ENCODE measurements at regions of chr4 and their contacts with region 1.

Region 1: GRCh38 chr4:99808260-99808857 is 8.3 kb upstream of the DAPP1 start:
- DNase-seq: peak; percentile 53 to 82 (median 66)
- ATAC-seq: peak; percentile 98
- H3K4me3 ChIP-seq: no peak overlapping the region
- H3K4me3 Mint-ChIP-seq: no peak overlapping the region
- H3K27ac ChIP-seq: no peak overlapping the region
- H3K27ac Mint-ChIP-seq: no peak overlapping the region
- H3K4me1 ChIP-seq: peaks cover 3% of the 10 kb centered on the region
- H3K4me1 Mint-ChIP-seq: peaks cover 6% of the 10 kb centered on the region
- H3K27me3 ChIP-seq: no peaks in the 10 kb centered on the region
- H3K27me3 Mint-ChIP-seq: peaks cover 6% of the 10 kb centered on the region
- CTCF ChIP-seq: peak; percentile 85

Region 2: DNA sequence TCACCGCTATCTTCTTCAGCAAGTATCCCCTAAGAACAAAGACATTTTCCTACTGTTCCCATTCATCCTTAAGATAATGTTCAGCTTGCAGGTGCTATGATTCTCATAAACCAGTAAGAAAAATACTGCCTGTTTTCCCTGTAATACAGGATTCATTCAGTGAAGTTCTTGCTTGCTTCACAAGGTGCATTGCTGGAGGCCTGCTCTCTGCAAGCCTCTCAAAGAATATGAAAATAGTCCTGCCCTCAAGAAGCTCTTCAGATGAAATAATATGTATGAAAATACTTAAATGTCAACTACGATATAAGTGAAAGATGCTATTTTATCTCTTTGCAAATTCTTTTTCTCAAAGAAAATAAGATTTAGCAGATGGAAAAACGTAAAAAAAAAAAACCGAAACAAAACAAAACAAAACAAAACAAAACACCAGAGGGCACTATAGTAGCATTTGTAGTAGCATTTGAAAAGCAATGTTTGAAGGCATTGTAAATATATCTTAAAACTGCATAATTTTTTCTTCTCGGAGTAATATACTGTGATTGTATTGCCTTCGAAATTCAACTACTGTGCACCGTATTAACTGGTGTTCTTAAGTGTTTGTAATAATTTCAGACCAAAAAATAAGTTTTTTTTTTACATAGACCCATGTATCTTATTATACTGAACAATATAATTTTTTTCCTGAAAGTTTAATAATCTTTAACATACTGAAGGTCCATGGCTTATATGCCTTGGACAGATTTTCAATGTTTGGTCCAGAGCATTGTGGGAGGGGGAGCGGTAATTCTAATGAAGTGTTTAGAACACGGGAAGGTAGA is 690.3 kb before region 1 on chr4:
- CTCF ChIA-PET with region 1: no interaction called
- POLR2A ChIA-PET with region 1: no interaction called
- intact Hi-C with region 1: loop called in 1 of 2 experiments (anchors 10 kb)
- DNase-seq: peak in 3 of 14 experiments; percentile 7 to 21 (median 15)
- ATAC-seq: no peak
- H3K4me3 ChIP-seq: no peak overlapping the region
- H3K4me3 Mint-ChIP-seq: no peak overlapping the region
- H3K27ac ChIP-seq: no peak overlapping the region
- H3K27ac Mint-ChIP-seq: no peak overlapping the region
- H3K4me1 ChIP-seq: no peaks in the 10 kb centered on the region
- H3K4me1 Mint-ChIP-seq: no peaks in the 10 kb centered on the region
- H3K27me3 ChIP-seq: no peaks in the 10 kb centered on the region
- H3K27me3 Mint-ChIP-seq: no peaks in the 10 kb centered on the region
- CTCF ChIP-seq: no peak

Region 3: GRCh38 chr4:99462875-99463464 is 345.4 kb before region 1 on chr4:
- CTCF ChIA-PET with region 1: no interaction called
- POLR2A ChIA-PET with region 1: no interaction called
- intact Hi-C with region 1: loop called (anchors 5 to 10 kb)
- DNase-seq: peak; percentile 4 to 67 (median 25)
- ATAC-seq: peak; percentile 70
- H3K4me3 ChIP-seq: no peak overlapping the region
- H3K4me3 Mint-ChIP-seq: no peak overlapping the region
- H3K27ac ChIP-seq: no peak overlapping the region
- H3K27ac Mint-ChIP-seq: no peak overlapping the region
- H3K4me1 ChIP-seq: no peaks in the 10 kb centered on the region
- H3K4me1 Mint-ChIP-seq: no peaks in the 10 kb centered on the region
- H3K27me3 ChIP-seq: no peaks in the 10 kb centered on the region
- H3K27me3 Mint-ChIP-seq: peaks cover 18% of the 10 kb centered on the region
- CTCF ChIP-seq: peak; percentile 83

Region 4: DNA sequence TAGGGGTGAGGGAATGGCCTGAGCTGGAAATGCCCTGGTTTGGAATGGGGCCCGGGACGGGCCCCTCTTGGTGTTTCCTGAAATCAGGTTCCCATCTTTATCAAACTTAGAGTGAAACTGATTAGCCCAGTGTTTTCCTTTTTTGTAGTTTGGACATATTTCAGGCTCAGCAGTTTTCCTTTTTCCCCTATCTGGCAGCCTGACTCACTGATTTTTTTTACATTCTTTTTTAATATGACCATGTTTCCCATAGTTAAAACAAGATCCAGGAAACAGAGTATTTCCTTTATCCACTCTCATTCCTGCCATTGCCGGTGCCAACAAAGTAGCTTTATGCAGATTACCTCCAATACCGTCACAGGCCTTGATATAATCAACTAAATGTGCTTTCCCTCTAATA is 318.1 kb before region 1 on chr4:
- CTCF ChIA-PET with region 1: no interaction called
- POLR2A ChIA-PET with region 1: no interaction called
- intact Hi-C with region 1: no loop called
- DNase-seq: no peak
- ATAC-seq: no peak
- H3K4me3 ChIP-seq: no peak overlapping the region
- H3K4me3 Mint-ChIP-seq: no peak overlapping the region
- H3K27ac ChIP-seq: no peak overlapping the region
- H3K27ac Mint-ChIP-seq: no peak overlapping the region
- H3K4me1 ChIP-seq: no peaks in the 10 kb centered on the region
- H3K4me1 Mint-ChIP-seq: no peaks in the 10 kb centered on the region
- H3K27me3 ChIP-seq: no peaks in the 10 kb centered on the region
- H3K27me3 Mint-ChIP-seq: peaks cover 5% of the 10 kb centered on the region
- CTCF ChIP-seq: no peak

Region 5: DNA sequence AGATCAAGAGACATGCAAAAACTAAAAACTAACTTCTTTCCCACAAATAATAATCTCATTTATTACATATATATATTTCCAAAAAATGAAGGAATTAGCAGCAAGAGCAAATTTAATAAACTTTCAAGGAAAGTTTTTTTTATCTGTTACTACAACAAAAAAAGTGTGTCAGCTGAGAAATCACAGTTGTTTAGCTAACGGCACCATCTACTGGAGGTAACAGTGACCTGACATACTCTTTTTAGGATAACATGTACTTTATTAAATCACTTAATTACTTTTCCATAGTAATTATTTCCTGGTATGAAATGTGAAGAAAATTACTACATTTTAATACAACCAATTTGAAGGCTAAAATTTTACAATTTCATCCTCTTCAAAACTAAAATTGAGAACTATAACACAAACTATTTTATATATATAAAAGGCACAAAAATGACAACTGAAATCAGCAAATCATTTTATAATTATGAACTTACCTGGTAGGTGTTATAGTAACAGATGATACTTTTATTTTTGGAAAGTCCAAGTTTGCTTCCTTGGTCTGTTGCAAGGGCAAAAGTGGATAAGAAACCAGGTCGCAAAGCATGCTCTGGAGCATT is 76.8 kb after region 1 on chr4:
- CTCF ChIA-PET with region 1: interaction called, 8 read pairs
- POLR2A ChIA-PET with region 1: no interaction called
- intact Hi-C with region 1: loop called (anchors 1 to 2 kb)
- DNase-seq: peak in 7 of 14 experiments; percentile 10 to 76 (median 30)
- ATAC-seq: peak; percentile 68
- H3K4me3 ChIP-seq: no peak overlapping the region
- H3K4me3 Mint-ChIP-seq: no peak overlapping the region
- H3K27ac ChIP-seq: no peak overlapping the region
- H3K27ac Mint-ChIP-seq: no peak overlapping the region
- H3K4me1 ChIP-seq: no peaks in the 10 kb centered on the region
- H3K4me1 Mint-ChIP-seq: peaks cover 17% of the 10 kb centered on the region
- H3K27me3 ChIP-seq: no peaks in the 10 kb centered on the region
- H3K27me3 Mint-ChIP-seq: no peaks in the 10 kb centered on the region
- CTCF ChIP-seq: peak; percentile 61

Measured in CD4-positive, alpha-beta T cell (primary cell).